PC-9 (cell line): ENCODE measurements at regions of chr11 and their contacts with region 1.

Region 1: DNA sequence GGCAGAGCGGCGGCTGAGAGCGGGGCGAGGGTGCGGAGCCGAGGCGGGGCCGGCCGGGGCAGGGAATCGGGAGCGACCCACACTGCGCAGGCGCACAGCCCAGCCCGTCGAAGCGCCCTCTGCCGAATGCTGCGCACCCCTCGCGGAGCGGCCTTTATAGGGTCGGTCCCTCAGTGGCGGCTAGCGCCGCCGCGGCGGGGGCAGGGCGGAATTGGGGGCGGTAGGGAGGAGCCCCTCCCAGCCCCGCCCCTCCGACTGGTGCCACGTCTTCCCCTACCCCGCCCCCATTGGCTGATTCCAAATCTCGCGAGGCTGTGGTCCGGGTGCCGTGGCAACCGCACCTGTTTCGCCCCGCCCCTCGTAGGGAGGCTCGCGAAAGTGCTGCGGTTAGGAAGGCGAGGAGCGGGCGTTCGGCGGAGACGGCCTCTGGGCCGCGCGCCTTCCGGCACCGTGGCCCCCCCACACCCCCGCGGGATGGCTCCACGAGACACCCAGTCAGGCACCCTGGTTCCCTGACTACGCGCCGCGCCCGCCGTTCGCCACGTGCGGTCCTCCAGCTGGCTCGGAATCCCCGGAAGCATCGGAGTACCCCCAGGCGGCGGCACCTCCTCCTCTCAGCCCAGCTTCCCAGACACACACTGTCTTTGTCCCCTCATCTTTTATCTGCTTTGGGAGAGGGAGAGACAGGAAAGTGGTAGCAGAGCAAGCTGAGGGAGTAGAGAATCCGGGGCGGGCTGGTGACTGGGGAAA is at the start of gene EHD1:
- DNase-seq: peak; percentile 92 to 99
- H3K4me3 ChIP-seq: peak within 1 kb of the TSS; percentile 98
- H3K27ac ChIP-seq: peak within 1 kb of the TSS; percentile 80
- H3K4me1 ChIP-seq: peaks cover 28% of the 10 kb centered on the region
- H3K27me3 ChIP-seq: no peaks in the 10 kb centered on the region
- CTCF ChIP-seq: peak; percentile 39
- total RNA-seq, gene EHD1: 110 and 134 TPM in 2 replicates

Region 2: DNA sequence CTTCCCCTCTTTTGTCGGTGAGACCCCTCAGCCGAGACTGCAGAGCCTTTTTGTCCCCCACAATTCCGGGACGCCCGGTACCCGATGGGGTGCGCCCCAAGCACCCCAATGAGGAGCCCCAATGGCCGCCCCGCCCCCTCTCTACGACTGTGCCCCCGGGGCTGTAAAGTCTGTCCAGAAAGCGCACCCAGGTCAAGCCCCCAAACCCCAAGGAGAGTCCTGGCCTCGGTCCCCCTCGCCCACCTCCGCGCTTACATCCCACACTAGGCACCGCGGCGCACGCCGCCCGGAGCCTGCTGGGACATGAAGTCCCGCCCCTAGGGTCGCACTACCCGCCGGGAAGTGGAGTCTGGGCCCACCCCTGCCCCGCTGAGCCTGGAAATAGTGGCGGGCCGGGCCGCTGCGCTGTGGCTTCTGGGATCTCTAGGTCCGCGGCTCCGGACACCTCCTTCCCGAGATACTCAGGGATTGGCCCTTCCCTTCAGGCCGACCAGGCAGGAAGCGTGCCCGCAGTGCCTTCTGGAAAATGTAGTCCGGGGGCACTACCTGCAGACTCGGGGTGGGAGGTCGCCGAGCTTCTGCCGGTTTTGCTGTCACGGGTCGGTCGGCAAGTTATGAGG is 68.3 kb before region 1 on chr11 and contains the start of gene MEN1:
- CTCF ChIA-PET with region 1: no interaction called
- POLR2A ChIA-PET with region 1: interaction called, 25 read pairs
- intact Hi-C with region 1: loop called (anchors 2 kb)
- DNase-seq: peak; percentile 91 to 98
- H3K4me3 ChIP-seq: peak within 1 kb of the TSS; percentile 93
- H3K27ac ChIP-seq: no peak within 1 kb of the TSS
- H3K4me1 ChIP-seq: peaks cover 6% of the 10 kb centered on the region; the same call in 1 of the 2 replicates
- H3K27me3 ChIP-seq: no peaks in the 10 kb centered on the region
- CTCF ChIP-seq: no peak
- total RNA-seq, gene MEN1: 48.7 and 61.6 TPM in 2 replicates

Region 3: GRCh38 chr11:64823568-64824133 is 55.0 kb before region 1 on chr11:
- CTCF ChIA-PET with region 1: no interaction called
- POLR2A ChIA-PET with region 1: no interaction called
- intact Hi-C with region 1: no loop called
- DNase-seq: no peak
- H3K4me3 ChIP-seq: no peak overlapping the region
- H3K27ac ChIP-seq: no peak overlapping the region
- H3K4me1 ChIP-seq: no peaks in the 10 kb centered on the region
- H3K27me3 ChIP-seq: no peaks in the 10 kb centered on the region
- CTCF ChIP-seq: no peak

Region 4: DNA sequence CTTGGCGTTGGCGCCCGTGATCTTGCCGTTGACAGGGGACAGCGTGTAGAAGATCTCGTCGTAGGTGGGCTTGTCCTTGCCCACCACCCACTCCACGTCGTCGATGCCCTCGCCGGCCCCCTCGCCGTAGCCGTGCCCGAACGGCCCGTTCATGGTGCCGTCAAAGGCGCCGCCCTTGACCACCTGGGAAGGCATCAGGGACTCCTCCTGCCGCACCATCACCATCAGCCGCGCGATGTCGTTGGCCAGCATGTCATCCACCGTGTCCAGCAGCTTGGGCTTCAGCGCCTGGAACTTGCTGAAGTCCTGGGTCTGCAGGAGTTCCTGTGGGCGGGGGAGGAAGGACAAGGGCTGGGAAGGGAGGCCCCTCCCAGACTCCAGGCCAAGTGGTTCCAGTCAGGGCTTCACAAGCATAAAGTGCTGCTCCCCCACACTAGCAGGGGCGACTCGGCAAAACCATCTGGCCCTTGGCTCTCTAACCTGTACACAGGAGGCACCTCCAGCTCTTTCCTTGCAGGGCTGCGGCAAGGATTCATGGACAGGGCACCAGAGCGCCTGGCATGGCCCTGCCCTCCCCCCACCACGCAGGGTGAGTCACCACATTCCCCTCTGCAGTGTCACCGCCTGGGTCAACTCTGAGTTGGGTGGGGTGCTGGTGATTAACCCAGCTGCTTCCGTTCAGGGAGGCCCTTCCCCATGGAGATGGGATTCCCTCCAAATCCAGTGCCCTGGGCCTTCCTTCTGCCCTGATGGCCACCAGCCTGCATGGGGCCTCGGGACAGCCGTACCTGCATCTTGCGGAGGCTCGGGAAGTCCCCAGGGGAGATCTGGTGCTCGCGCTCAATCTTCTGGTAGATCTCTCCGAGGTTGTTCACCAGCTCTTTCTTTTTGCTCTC is 23.9 kb before region 1 on chr11:
- CTCF ChIA-PET with region 1: interaction called, 6 read pairs
- POLR2A ChIA-PET with region 1: interaction called, 22 read pairs
- intact Hi-C with region 1: loop called (anchors 1 kb)
- DNase-seq: peak; percentile 96 to 99
- H3K4me3 ChIP-seq: peak overlapping the region; percentile 18; the same call in 1 of the 2 replicates
- H3K27ac ChIP-seq: peak overlapping the region; percentile 84
- H3K4me1 ChIP-seq: peaks cover 88% of the 10 kb centered on the region
- H3K27me3 ChIP-seq: no peaks in the 10 kb centered on the region
- CTCF ChIP-seq: no peak

Region 5: GRCh38 chr11:64864473-64865285 is 14.0 kb before region 1 on chr11:
- CTCF ChIA-PET with region 1: interaction called, 4 read pairs
- POLR2A ChIA-PET with region 1: interaction called, 21 read pairs
- intact Hi-C with region 1: loop called (anchors 1 kb)
- DNase-seq: peak in 1 of 2 experiments; percentile 79
- H3K4me3 ChIP-seq: no peak overlapping the region
- H3K27ac ChIP-seq: no peak overlapping the region
- H3K4me1 ChIP-seq: peaks cover 41% of the 10 kb centered on the region
- H3K27me3 ChIP-seq: no peaks in the 10 kb centered on the region
- CTCF ChIP-seq: no peak

Region 6: GRCh38 chr11:65021003-65021402 is 142.3 kb after region 1 on chr11:
- CTCF ChIA-PET with region 1: no interaction called
- POLR2A ChIA-PET with region 1: no interaction called
- intact Hi-C with region 1: no loop called
- DNase-seq: no peak
- H3K4me3 ChIP-seq: no peak overlapping the region
- H3K27ac ChIP-seq: no peak overlapping the region
- H3K4me1 ChIP-seq: no peaks in the 10 kb centered on the region
- H3K27me3 ChIP-seq: no peaks in the 10 kb centered on the region
- CTCF ChIP-seq: no peak